Mammary epithelial cell (primary cell): ENCODE measurements at regions of chr5 and their contacts with region 1.

Region 1: GRCh38 chr5:137146402-137146890 is 352.7 kb downstream of the SPOCK1 start:
- DNase-seq: peak; percentile 99
- H3K4me3 ChIP-seq: peak overlapping the region in 1 of 3 experiments; percentile 32
- H3K27ac ChIP-seq: peak overlapping the region; percentile 97
- H3K4me1 ChIP-seq: peaks cover 40% of the 10 kb centered on the region
- H3K27me3 ChIP-seq: no peaks in the 10 kb centered on the region
- CTCF ChIP-seq: no peak

Region 2: DNA sequence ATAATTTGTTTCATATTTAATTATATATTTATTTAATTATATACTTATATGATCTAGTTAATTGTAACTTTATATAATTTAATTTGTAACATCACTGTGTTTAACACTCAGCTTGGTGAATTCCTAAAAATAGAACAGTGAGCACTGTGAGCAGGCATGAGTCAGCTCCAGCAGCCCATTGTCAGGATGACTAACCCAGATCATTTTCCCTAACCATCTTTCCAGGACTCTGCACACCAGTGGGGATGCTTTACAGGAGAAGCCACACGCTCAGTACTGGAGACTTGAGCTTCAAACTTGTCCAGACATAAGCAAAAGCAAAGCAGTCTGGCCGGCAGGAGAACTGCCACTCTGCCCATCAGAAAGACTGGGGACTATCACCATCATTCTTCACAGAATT is 334.9 kb before region 1 on chr5:
- CTCF ChIA-PET with region 1: no interaction called
- dilution Hi-C with region 1: no loop called
- in situ Hi-C with region 1: no loop called
- intact Hi-C with region 1: loop called (anchors 5 kb)
- DNase-seq: peak; percentile 71
- H3K4me3 ChIP-seq: no peak overlapping the region
- H3K27ac ChIP-seq: no peak overlapping the region
- H3K4me1 ChIP-seq: peaks cover 14% of the 10 kb centered on the region
- H3K27me3 ChIP-seq: no peaks in the 10 kb centered on the region
- CTCF ChIP-seq: no peak

Region 3: DNA sequence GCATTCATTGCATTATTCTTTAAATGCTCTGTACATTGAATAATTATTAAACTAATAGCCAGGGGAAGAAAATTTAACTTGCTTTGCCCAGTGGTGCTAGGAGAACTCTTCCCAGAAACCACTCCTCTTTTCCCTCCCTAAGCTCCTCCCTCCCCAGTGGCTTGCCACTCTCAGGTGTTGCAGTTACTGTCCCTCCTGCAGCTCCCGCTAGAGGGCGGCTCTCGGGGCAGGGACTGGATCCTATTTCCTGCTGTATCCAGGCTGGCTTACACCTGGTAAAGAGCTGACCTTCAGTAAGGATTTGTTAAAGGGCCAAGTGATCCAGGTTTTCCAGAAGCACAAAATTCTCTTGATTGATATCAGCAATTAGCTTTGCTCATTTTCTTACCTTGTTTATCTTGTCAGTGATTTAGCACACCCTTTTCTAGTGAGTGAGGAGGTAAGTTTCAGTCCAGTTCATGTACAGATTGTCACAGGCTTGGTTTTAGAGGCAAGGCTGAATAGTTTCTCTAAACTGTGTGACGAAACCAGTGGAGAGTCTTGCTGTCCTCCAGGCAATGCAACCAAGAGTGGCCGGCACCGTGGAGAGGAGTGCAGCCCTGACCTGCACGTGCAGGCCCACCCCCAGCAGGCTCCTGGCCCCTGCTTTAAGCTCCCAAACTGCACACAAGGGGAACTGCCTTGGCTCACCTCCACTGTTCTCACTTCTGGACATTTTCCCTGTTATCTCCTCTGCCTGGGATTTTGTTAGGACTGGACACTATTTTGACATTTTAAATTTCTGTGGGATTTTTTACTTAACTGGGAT is 71.1 kb before region 1 on chr5:
- CTCF ChIA-PET with region 1: interaction called, 9 read pairs
- dilution Hi-C with region 1: no loop called
- in situ Hi-C with region 1: no loop called
- intact Hi-C with region 1: loop called (anchors 1 kb)
- DNase-seq: peak; percentile 78
- H3K4me3 ChIP-seq: no peak overlapping the region
- H3K27ac ChIP-seq: peak overlapping the region; percentile 22
- H3K4me1 ChIP-seq: peaks cover 21% of the 10 kb centered on the region
- H3K27me3 ChIP-seq: no peaks in the 10 kb centered on the region
- CTCF ChIP-seq: peak; percentile 94

Region 4: DNA sequence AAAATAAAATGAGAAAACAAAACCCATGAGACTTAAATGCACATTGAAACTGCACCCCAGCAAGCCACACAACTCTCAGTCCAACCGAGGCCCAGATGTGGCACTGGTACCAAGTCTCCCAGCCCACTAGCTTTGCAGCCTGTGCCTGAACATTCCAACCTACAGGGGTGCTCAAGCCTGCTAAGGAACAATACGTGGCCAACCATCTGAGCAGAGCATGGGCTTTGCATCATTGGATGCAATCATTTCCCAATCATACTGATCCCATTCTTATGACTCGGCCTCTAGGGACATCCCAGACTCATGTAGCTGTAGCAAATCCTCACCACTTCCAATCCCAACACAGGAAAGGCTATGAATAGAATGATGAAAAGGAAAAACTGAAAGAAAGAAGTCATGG is 55.4 kb after region 1 on chr5:
- CTCF ChIA-PET with region 1: no interaction called
- dilution Hi-C with region 1: no loop called
- in situ Hi-C with region 1: no loop called
- intact Hi-C with region 1: loop called (anchors 2 kb)
- DNase-seq: peak; percentile 76
- H3K4me3 ChIP-seq: no peak overlapping the region
- H3K27ac ChIP-seq: no peak overlapping the region
- H3K4me1 ChIP-seq: peaks cover 28% of the 10 kb centered on the region
- H3K27me3 ChIP-seq: no peaks in the 10 kb centered on the region
- CTCF ChIP-seq: peak; percentile 27 to 42

Region 5: DNA sequence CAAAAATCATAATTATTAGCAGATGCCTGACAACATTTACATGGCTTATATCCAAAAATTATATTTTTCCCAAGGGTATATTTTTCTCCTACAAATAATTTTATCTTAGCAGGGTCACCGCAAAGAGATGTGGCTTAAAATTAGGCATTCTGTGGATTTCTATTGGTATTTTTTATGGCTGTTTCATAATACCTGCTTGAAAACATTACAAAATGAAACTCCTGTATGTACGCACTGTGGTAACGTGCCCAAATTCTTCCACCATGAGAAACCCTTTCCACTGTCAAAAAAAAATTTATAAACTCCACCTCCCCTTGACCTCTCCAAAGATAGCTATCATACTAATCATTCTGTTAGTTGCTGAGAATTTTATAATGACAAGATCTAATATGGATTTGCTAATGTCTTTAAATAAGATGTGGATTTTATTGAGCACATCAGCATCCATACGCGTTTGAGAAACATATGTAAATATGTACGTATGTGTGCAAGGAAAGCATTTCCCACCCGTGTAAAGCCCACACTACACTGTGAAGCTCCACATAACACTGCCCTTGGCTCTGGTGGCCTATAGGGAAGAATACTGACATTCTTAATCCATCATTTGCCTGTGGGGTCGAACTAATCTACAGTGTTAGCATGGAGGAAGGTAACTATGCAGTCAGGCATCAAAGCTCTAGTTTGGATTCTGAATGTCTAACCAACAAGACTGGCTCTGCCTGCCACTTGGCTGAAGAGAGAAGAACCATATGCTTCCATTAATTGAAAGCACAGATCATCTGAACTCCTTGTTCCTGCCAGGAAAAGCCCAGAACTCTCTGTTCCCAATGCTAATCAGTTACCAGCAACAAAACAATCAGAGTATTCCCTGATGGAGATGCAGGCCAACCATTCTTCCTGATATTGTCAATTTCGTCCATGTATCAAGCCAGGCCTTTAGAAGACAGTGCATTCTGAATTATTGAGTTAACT is 108.0 kb after region 1 on chr5:
- CTCF ChIA-PET with region 1: no interaction called
- dilution Hi-C with region 1: no loop called
- in situ Hi-C with region 1: no loop called
- intact Hi-C with region 1: no loop called
- DNase-seq: no peak
- H3K4me3 ChIP-seq: no peak overlapping the region
- H3K27ac ChIP-seq: no peak overlapping the region
- H3K4me1 ChIP-seq: no peaks in the 10 kb centered on the region
- H3K27me3 ChIP-seq: no peaks in the 10 kb centered on the region
- CTCF ChIP-seq: no peak

Region 6: DNA sequence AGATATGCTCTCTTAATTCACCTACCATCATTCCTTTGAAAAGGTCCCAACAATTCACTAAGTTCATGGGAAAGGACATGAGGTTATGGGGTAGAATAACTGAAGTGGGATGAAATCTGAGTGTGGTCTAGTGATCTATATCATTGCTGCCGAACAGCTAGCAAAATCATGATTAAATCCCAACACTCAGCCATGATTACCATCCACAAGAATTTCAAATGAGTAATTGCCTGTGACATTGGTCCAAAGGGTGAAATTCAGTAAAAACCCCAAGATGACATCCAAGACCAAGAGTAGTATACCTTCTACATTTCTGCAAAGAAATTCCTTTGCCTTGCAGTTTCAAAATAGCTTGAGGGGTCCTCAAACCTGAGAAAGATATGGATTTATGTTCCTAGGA is 127.1 kb after region 1 on chr5:
- CTCF ChIA-PET with region 1: no interaction called
- dilution Hi-C with region 1: no loop called
- in situ Hi-C with region 1: no loop called
- intact Hi-C with region 1: no loop called
- DNase-seq: peak; percentile 23
- H3K4me3 ChIP-seq: no peak overlapping the region
- H3K27ac ChIP-seq: no peak overlapping the region
- H3K4me1 ChIP-seq: no peaks in the 10 kb centered on the region
- H3K27me3 ChIP-seq: no peaks in the 10 kb centered on the region
- CTCF ChIP-seq: no peak

Region 7: GRCh38 chr5:137395008-137395755 is 248.7 kb after region 1 on chr5:
- CTCF ChIA-PET with region 1: no interaction called
- dilution Hi-C with region 1: no loop called
- in situ Hi-C with region 1: no loop called
- intact Hi-C with region 1: no loop called
- DNase-seq: peak; percentile 75
- H3K4me3 ChIP-seq: no peak overlapping the region
- H3K27ac ChIP-seq: no peak overlapping the region
- H3K4me1 ChIP-seq: peaks cover 24% of the 10 kb centered on the region
- H3K27me3 ChIP-seq: peaks cover 2% of the 10 kb centered on the region
- CTCF ChIP-seq: no peak